Activated CD4-positive, alpha-beta T cell treated with anti-CD3 and anti-CD28 coated beads, Interleukin-2, amount 10 ng/mL, durations not matched to agents 24 days and 14 days (primary cell): ENCODE measurements at regions of chr12 and their contacts with region 1.

Region 1: GRCh38 chr12:113098446-113098896 is 37.1 kb downstream of the RASAL1 start:
- DNase-seq: peak; percentile 87
- H3K4me3 Mint-ChIP-seq: no peak overlapping the region
- H3K27ac Mint-ChIP-seq: no peak overlapping the region
- H3K4me1 Mint-ChIP-seq: peaks cover 2% of the 10 kb centered on the region
- H3K27me3 Mint-ChIP-seq: no peaks in the 10 kb centered on the region

Region 2: DNA sequence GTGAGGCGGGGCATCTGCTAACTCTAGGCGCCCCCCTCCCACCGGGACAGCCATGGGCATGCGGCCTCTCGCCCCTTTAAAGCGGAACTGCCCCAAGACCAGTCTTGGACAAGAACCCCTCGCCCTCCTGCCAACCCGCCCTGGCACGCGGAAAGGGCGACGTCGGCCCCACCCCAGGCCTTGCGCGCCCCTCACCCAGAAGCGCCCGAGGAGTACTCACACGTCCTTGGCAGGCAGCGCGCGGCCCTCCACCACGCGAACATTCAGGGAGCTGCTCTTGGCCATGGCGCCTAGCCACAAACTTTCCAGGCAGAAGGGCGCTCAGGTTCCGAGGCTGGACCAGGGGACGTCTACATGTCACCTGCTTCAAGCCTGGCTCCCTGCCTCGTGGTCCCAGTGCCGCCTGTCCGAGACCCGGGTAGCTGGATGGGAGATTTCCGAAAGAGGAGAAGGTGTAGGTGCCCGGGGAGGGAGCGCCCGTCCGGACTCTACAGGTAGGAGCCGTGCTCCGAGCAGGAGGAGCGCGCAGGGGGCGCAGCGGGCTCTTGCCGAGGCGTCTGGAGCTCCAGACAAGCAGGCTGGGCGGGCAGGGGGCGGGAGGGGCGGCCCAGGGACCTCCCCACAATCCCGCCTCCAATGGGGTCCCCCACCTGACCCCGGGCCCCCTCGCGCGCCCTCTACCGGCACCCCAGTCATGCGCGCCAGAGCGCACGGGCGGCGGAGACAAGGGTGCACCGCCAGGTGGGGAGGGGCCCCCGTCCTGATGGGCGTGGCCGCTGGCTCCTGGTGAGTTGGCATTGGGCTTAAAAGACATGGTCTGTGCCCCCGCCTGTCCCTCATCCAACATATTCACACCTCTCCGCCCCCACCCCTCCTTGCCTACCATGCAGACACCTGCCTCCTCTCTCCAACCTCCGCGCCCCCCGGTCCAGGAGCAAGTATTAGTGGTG is 37.0 kb after region 1 on chr12 and contains the start of gene RASAL1:
- intact Hi-C with region 1: loop called (anchors 5 kb)
- DNase-seq: peak; percentile 91
- H3K4me3 Mint-ChIP-seq: peak within 1 kb of the TSS; percentile 81
- H3K27ac Mint-ChIP-seq: peak within 1 kb of the TSS; percentile 54
- H3K4me1 Mint-ChIP-seq: peaks cover 16% of the 10 kb centered on the region
- H3K27me3 Mint-ChIP-seq: peaks cover 2% of the 10 kb centered on the region
- total RNA-seq, gene RASAL1: 0.52 and 1.1 TPM in 2 replicates

Region 3: GRCh38 chr12:113359133-113359938 is 260.9 kb after region 1 on chr12:
- intact Hi-C with region 1: no loop called
- DNase-seq: peak; percentile 61
- H3K4me3 Mint-ChIP-seq: peak overlapping the region; percentile 89
- H3K27ac Mint-ChIP-seq: peak overlapping the region; percentile 30
- H3K4me1 Mint-ChIP-seq: peaks cover 16% of the 10 kb centered on the region
- H3K27me3 Mint-ChIP-seq: no peaks in the 10 kb centered on the region